ENCODE measurements at regions of chr20 and their contacts with region 1.

Region 1: GRCh38 chr20:20860078-20860806 is 147.8 kb upstream of the RALGAPA2 start:
- H3K4me3 ChIP-seq: no peak overlapping the region
- H3K27ac ChIP-seq: no peak overlapping the region
- H3K4me1 ChIP-seq: no peaks in the 10 kb centered on the region
- CTCF ChIP-seq: peak; percentile 88

Region 2: GRCh38 chr20:20814685-20815084 is 45.6 kb before region 1 on chr20:
- CTCF ChIA-PET with region 1: no interaction called
- POLR2A ChIA-PET with region 1: no interaction called
- H3K4me3 ChIP-seq: no peak overlapping the region
- H3K27ac ChIP-seq: no peak overlapping the region
- H3K4me1 ChIP-seq: no peaks in the 10 kb centered on the region
- CTCF ChIP-seq: no peak

Region 3: DNA sequence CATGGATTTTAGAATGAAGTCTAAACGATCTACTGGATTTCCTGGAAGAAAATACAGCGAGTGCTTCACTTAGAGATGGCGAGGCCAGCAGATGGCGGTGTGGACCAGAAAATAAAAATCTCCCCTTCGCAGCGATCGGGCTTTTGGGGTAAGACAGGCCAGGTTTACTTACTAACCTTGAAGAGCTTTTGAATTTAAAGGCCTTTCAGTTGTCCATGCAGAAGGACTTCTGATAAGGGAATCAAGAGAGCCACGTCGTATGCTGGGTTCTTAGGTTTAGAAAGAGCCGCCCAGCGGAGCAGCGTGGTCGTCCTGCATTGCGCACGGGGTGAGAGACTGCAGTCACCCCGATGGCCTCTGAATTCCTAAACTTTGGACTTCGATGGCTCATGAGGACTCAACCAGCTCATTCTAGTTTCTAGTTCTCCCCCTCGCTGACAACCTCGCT is 22.6 kb before region 1 on chr20:
- CTCF ChIA-PET with region 1: interaction called, 39 read pairs
- POLR2A ChIA-PET with region 1: no interaction called
- H3K4me3 ChIP-seq: no peak overlapping the region
- H3K27ac ChIP-seq: no peak overlapping the region
- H3K4me1 ChIP-seq: no peaks in the 10 kb centered on the region
- CTCF ChIP-seq: peak; percentile 51; the same call in 1 of the 2 replicates

Region 4: GRCh38 chr20:20872428-20872827 is 12.2 kb after region 1 on chr20:
- CTCF ChIA-PET with region 1: interaction called, 25 read pairs
- POLR2A ChIA-PET with region 1: no interaction called
- H3K4me3 ChIP-seq: no peak overlapping the region
- H3K27ac ChIP-seq: no peak overlapping the region
- H3K4me1 ChIP-seq: no peaks in the 10 kb centered on the region
- CTCF ChIP-seq: no peak

Region 5: GRCh38 chr20:21048841-21049273 is 188.6 kb after region 1 on chr20:
- CTCF ChIA-PET with region 1: interaction called, 16 read pairs
- POLR2A ChIA-PET with region 1: no interaction called
- H3K4me3 ChIP-seq: no peak overlapping the region
- H3K27ac ChIP-seq: no peak overlapping the region
- H3K4me1 ChIP-seq: peaks cover 7% of the 10 kb centered on the region; the same call in 1 of the 2 replicates
- CTCF ChIP-seq: peak; percentile 21; the same call in 1 of the 2 replicates

Region 6: DNA sequence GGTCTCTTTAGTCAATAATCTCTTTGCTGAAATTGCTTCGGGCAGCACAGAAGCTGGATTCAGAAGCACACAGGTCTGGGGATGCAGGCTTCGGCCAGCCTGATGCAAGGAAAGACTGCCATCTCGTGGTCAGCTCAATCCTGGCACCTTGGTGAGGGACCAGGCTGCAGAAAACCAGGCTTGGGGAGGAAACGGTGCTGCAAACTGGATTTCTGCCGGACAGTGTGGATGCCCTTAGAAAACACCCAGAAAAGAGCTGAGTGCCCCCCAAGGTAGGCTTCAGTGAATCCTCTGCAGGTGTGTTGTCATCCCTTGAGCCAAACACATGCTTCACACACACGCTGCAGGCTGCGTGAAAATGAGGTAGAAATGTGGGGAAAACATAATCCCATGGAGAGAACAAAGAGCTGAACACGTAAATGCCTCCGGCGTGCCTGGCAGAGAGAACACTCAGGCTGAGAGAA is 755.4 kb after region 1 on chr20:
- CTCF ChIA-PET with region 1: interaction called, 11 read pairs
- POLR2A ChIA-PET with region 1: no interaction called
- H3K4me3 ChIP-seq: no peak overlapping the region
- H3K27ac ChIP-seq: no peak overlapping the region
- H3K4me1 ChIP-seq: 0 out of 2 replicates have a peak, but pooled peaks cover 4% of the 10 kb centered on the region
- CTCF ChIP-seq: peak; percentile 75

Measured in HEK293 (cell line).